Activated naive CD4-positive, alpha-beta T cell treated with anti-CD3 and anti-CD28 coated beads for 36 hours (primary cell): ENCODE measurements at regions of chr2 and their contacts with region 1.

Region 1: DNA sequence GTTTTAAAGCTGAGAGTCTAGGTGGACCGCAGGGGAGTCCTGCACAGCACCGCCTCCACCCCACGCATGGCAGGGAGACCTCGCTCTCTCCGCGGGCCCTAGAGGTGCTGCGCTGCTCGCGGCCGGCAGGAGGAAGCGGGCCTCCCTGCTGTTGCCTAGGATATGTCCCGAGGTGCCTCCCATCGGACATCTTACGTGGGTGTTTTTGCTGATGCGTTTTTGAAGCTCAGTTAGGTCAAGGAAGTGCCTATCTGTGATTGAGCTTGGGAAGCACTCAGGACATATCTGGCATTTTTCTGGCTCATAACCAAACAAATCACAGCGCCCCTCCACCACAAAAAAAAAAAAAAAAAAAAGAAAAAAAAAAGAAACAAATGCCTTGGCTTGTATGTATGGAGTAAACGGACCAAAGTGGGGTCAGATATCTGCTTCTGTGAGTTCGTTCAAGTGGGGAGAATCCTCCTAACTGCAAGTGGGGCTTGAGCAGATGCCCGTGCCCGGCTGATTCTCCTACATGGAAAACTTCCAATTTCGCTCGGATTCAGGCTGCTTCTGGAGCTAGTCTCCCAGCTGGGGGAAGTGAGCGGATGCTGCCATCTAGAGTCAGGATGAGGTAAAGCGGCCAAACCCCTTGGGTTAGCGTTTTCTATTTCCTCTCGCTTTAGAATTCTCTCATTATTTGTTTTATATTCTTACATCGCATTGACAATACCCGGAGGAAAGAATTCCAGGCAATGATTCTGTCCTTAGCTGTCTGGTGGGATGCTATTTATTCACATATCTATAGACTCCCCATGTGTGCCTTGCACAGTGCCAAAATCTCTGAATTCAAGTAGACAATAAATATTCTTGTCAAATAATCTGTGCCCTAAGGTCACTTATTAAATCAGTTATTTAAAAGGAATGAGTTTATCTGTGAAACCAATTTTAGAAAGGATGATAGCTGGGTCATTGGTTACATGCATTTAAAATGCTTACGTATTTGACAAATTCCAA is 95.3 kb downstream of the CD8B2 start:
- DNase-seq: peak; percentile 75
- H3K4me3 Mint-ChIP-seq: peak overlapping the region; percentile 80
- H3K27ac Mint-ChIP-seq: no peak overlapping the region
- H3K4me1 Mint-ChIP-seq: peaks cover 16% of the 10 kb centered on the region
- H3K27me3 Mint-ChIP-seq: peaks cover 35% of the 10 kb centered on the region

Region 2: DNA sequence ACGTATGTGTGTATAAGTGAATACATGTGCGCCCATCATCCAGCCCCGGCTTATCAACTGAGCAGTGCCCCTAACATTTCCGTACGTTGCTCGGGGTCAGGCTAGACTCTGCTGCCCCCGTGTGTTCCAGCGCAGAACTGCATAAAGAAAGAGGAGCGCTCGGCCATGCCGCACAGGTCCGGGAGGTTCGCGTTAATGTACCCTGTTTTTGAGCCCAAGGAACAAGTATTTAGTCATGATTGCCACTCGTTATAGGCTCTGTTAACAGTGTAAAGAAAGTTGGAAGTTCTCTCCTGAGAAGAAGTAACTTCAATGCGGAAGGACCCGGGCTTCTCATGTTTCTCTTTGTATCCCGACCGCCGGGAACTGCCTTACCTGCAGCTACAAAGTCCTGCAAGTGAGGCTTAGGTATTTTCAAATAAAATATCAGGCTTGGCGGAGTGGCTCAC is 39.6 kb before region 1 on chr2:
- CTCF ChIA-PET with region 1: interaction called, 14 read pairs
- intact Hi-C with region 1: loop called (anchors 1 kb)
- DNase-seq: peak; percentile 81
- H3K4me3 Mint-ChIP-seq: peak overlapping the region; percentile 68
- H3K27ac Mint-ChIP-seq: no peak overlapping the region
- H3K4me1 Mint-ChIP-seq: peaks cover 4% of the 10 kb centered on the region
- H3K27me3 Mint-ChIP-seq: peaks cover 8% of the 10 kb centered on the region